MCF 10A (cell line): ENCODE measurements at regions of chr2 and their contacts with region 1.

Region 1: DNA sequence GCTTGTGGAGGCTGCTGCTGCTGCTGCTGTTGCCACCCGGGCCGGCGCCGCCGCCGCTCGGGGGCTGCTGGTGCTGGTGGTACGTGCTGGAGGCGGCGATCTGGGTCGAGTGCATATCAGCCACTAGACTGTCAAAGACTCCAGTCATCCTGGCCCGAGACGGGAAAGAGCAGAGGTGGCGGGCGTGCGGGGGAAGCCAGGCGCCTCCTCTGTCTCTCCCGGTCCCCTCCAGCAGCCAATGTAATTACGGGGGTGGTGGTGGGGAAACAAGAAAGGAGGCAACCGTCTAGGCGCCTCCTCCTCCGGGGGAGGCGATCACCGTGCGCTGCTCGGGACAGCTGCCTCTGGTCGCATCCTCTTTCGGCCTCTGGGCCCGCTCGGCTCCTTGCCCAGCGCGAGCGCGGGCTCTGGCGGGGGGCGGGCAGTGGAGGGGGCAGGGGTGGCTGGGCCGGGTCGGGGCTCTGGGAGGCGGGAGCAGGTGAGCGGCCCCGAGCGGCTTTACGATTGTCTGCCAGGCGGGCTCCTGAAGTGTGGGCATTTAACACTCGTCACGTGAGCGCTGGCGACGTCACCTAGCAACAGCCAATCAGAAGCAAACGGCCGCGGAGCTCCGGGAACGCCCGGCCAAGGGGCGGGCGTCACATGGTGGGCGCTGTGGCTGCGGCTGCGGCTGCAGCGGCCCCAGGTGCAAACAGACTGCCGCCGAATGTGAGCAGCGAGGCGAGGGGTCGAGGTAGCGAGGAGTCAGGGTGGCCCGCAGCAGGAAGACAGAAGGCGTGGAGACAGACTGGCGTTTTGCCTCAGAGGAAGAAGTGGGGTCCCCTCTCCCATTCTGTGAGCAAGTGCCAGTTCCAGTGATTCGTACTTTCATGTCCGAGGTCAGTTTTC is at the start of gene DLX2:
- DNase-seq: peak; percentile 90
- H3K4me3 Mint-ChIP-seq: peak within 1 kb of the TSS; percentile 92
- H3K27ac Mint-ChIP-seq: peak within 1 kb of the TSS; percentile 88
- H3K4me1 Mint-ChIP-seq: peaks cover 13% of the 10 kb centered on the region
- H3K27me3 Mint-ChIP-seq: no peaks in the 10 kb centered on the region
- CTCF ChIP-seq: no peak
- total RNA-seq, gene DLX2: 1.1 and 1.9 TPM in 2 replicates

Region 2: GRCh38 chr2:171598713-171599319 is 503.8 kb before region 1 on chr2:
- CTCF ChIA-PET with region 1: no interaction called
- POLR2A ChIA-PET with region 1: no interaction called
- intact Hi-C with region 1: loop called (anchors 2 kb)
- DNase-seq: peak; percentile 81
- H3K4me3 Mint-ChIP-seq: no peak overlapping the region
- H3K27ac Mint-ChIP-seq: no peak overlapping the region
- H3K4me1 Mint-ChIP-seq: peaks cover 12% of the 10 kb centered on the region
- H3K27me3 Mint-ChIP-seq: no peaks in the 10 kb centered on the region
- CTCF ChIP-seq: peak; percentile 60

Region 3: DNA sequence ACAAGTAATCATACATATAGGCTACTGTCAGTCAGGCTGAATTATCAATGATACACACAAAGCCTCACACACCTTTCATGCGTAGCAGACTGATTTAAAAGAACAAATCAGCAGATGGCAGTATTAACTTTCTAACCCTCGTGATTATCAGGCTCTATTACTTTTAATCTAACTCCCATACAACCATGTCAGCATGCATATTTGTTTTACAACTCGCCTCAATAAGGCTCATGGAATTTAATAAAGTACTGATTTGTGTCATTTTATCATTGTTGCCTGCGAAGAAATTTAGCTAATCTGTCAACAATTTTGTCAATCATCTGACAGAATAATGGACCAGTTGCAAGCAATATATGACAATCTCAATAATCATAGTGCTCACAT is 291.4 kb before region 1 on chr2:
- CTCF ChIA-PET with region 1: interaction called, 36 read pairs
- POLR2A ChIA-PET with region 1: interaction called, 4 read pairs
- intact Hi-C with region 1: loop called (anchors 1 kb)
- DNase-seq: peak; percentile 46
- H3K4me3 Mint-ChIP-seq: no peak overlapping the region
- H3K27ac Mint-ChIP-seq: no peak overlapping the region
- H3K4me1 Mint-ChIP-seq: peaks cover 12% of the 10 kb centered on the region
- H3K27me3 Mint-ChIP-seq: no peaks in the 10 kb centered on the region
- CTCF ChIP-seq: peak; percentile 34

Region 4: DNA sequence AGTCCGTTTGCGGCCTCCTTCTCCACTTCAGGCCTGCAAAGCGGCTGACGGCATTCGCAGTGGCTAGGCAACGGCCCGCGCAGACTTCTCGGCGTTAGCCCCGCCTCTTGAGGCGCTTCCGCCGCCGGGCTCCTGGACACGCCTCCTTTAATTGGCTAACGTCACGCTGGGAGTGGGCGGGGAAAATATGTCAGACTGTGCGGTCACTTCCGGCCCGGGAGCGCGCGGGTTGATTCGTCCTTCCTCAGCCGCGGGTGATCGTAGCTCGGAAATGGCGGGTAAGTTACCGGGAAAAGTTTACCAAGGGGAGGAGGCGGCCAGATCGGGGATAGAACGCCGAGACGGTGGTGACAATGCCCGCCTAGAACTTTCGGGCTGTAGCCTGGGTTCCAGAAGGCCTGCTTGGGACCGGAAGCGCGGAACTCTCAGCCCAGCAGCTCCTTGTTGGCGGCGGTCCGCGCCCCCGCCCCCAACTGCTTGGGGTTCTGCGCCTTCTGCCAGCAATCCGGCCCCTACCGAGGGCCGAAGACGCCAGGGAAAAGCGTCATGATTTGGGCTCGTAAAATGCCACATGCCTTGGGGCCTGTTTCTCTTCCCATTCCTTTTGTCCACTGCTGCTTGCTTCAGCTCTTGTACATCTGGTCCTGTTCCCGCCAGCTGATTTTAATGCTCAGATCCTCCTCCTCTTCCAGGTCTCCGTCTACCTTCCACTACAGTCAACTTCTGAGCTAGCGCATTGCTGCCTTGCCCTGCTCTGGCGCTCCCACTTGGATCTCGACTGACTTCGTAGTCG is 180.2 kb before region 1 on chr2 and contains the start of gene HAT1:
- CTCF ChIA-PET with region 1: interaction called, 4 read pairs
- POLR2A ChIA-PET with region 1: interaction called, 35 read pairs
- intact Hi-C with region 1: loop called (anchors 1 kb)
- DNase-seq: peak; percentile 98
- H3K4me3 Mint-ChIP-seq: peak within 1 kb of the TSS; percentile 90
- H3K27ac Mint-ChIP-seq: peak within 1 kb of the TSS; percentile 97
- H3K4me1 Mint-ChIP-seq: peaks cover 16% of the 10 kb centered on the region
- H3K27me3 Mint-ChIP-seq: no peaks in the 10 kb centered on the region
- CTCF ChIP-seq: no peak
- total RNA-seq, gene HAT1: 40.7 and 41.8 TPM in 2 replicates

Region 5: DNA sequence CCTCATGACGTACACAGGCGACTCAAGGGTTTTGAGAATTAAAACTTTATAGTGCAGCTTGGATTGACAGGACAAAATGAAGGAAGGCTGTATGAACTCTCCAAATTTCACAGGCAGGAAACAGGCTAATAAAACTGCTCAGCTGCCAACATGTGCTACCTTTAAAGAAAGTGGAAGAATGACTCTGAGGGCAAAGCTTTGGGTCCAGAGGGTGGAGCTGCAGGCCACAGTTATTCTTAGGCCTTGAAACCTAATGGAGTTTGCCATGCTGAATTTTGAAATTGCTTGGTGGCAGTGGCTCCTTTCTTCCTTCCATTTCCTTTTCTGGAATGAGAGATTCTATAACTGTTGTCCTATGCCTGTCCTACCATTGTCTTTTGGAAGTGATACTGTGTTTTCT is 145.6 kb before region 1 on chr2:
- CTCF ChIA-PET with region 1: interaction called, 3 read pairs
- POLR2A ChIA-PET with region 1: interaction called, 6 read pairs
- intact Hi-C with region 1: loop called (anchors 2 kb)
- DNase-seq: peak; percentile 27
- H3K4me3 Mint-ChIP-seq: no peak overlapping the region
- H3K27ac Mint-ChIP-seq: no peak overlapping the region
- H3K4me1 Mint-ChIP-seq: peaks cover 36% of the 10 kb centered on the region
- H3K27me3 Mint-ChIP-seq: no peaks in the 10 kb centered on the region
- CTCF ChIP-seq: no peak

Region 6: GRCh38 chr2:172084734-172085459 is 17.7 kb before region 1 on chr2:
- CTCF ChIA-PET with region 1: interaction called, 3 read pairs
- POLR2A ChIA-PET with region 1: interaction called, 55 read pairs
- intact Hi-C with region 1: no loop called
- DNase-seq: peak; percentile 96
- H3K4me3 Mint-ChIP-seq: peak overlapping the region; percentile 80
- H3K27ac Mint-ChIP-seq: peak overlapping the region; percentile 47
- H3K4me1 Mint-ChIP-seq: no peaks in the 10 kb centered on the region
- H3K27me3 Mint-ChIP-seq: no peaks in the 10 kb centered on the region
- CTCF ChIP-seq: no peak

Region 7: GRCh38 chr2:172131713-172132555 is 29.3 kb after region 1 on chr2:
- CTCF ChIA-PET with region 1: interaction called, 10 read pairs
- POLR2A ChIA-PET with region 1: interaction called, 15 read pairs
- intact Hi-C with region 1: loop called (anchors 1 kb)
- DNase-seq: no peak
- H3K4me3 Mint-ChIP-seq: no peak overlapping the region
- H3K27ac Mint-ChIP-seq: peak overlapping the region; percentile 27
- H3K4me1 Mint-ChIP-seq: peaks cover 8% of the 10 kb centered on the region
- H3K27me3 Mint-ChIP-seq: no peaks in the 10 kb centered on the region
- CTCF ChIP-seq: no peak

Region 8: GRCh38 chr2:172153156-172153555 is 50.5 kb after region 1 on chr2:
- CTCF ChIA-PET with region 1: no interaction called
- POLR2A ChIA-PET with region 1: no interaction called
- intact Hi-C with region 1: no loop called
- DNase-seq: no peak
- H3K4me3 Mint-ChIP-seq: no peak overlapping the region
- H3K27ac Mint-ChIP-seq: no peak overlapping the region
- H3K4me1 Mint-ChIP-seq: no peaks in the 10 kb centered on the region
- H3K27me3 Mint-ChIP-seq: peaks cover 42% of the 10 kb centered on the region
- CTCF ChIP-seq: no peak

Region 9: GRCh38 chr2:172525606-172526005 is 423.0 kb after region 1 on chr2:
- CTCF ChIA-PET with region 1: no interaction called
- POLR2A ChIA-PET with region 1: no interaction called
- intact Hi-C with region 1: no loop called
- DNase-seq: no peak
- H3K4me3 Mint-ChIP-seq: no peak overlapping the region
- H3K27ac Mint-ChIP-seq: no peak overlapping the region
- H3K4me1 Mint-ChIP-seq: no peaks in the 10 kb centered on the region
- H3K27me3 Mint-ChIP-seq: no peaks in the 10 kb centered on the region
- CTCF ChIP-seq: no peak